CD4-positive, alpha-beta memory T cell (primary cell): ENCODE measurements at regions of chr20 and their contacts with region 1.

Region 1: DNA sequence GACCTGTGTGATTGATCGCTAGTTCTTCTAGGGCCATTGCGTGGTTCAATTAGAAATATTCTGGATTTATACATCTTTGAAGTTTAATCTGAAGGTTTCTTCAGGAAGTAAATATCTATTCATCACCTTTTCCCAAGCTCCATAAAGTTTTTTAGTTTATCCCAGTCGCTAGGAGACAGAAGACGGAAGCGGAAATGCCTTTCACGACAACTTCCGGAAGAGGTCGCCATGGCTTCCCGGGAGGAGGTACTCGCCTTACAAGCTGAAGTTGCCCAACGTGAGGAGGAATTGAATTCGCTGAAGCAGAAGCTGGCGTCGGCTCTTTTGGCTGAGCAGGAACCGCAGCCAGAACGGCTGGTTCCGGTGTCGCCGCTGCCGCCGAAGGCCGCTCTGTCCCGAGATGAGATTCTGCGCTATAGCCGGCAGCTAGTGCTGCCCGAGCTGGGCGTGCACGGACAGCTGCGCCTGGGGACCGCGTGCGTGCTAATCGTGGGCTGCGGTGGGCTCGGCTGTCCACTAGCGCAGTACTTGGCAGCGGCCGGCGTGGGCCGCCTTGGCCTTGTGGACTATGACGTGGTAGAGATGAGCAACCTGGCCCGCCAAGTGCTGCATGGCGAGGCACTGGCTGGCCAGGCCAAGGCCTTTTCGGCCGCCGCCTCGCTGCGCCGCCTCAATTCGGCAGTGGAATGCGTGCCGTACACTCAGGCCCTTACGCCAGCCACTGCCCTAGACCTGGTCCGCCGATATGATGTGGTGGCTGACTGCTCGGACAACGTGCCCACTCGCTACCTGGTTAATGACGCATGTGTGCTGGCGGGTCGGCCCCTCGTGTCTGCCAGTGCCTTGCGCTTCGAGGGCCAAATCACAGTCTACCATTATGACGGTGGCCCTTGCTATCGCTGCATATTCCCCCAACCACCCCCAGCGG is at the start of gene MOCS3:
- DNase-seq: peak; percentile 93
- H3K4me3 ChIP-seq: peak within 1 kb of the TSS; percentile 86 to 90
- H3K4me3 Mint-ChIP-seq: peak within 1 kb of the TSS; percentile 91 to 98 (median 96)
- H3K27ac ChIP-seq: peak within 1 kb of the TSS; percentile 91
- H3K27ac Mint-ChIP-seq: peak within 1 kb of the TSS; percentile 96 to 100 (median 100)
- H3K4me1 ChIP-seq: peaks cover 40% of the 10 kb centered on the region
- H3K4me1 Mint-ChIP-seq: peaks cover 23 to 68% (median 52%) of the 10 kb centered on the region in 4 donors
- H3K27me3 ChIP-seq: no peaks in the 10 kb centered on the region
- H3K27me3 Mint-ChIP-seq: no peaks in the 10 kb centered on the region
- total RNA-seq, gene MOCS3: 8.8 to 8.9 TPM

Region 2: GRCh38 chr20:50731055-50731871 is 227.6 kb before region 1 on chr20 and contains the start of gene PARD6B:
- CTCF ChIA-PET with region 1: no interaction called
- POLR2A ChIA-PET with region 1: interaction called, 6 read pairs
- intact Hi-C with region 1: loop called (anchors 1 kb)
- DNase-seq: peak; percentile 99 to 100 (median 100)
- H3K4me3 ChIP-seq: peak within 1 kb of the TSS; percentile 66 to 72
- H3K4me3 Mint-ChIP-seq: peak within 1 kb of the TSS; percentile 90 to 95 (median 92)
- H3K27ac ChIP-seq: peak within 1 kb of the TSS; percentile 55
- H3K27ac Mint-ChIP-seq: peak within 1 kb of the TSS; percentile 83 to 91 (median 87)
- H3K4me1 ChIP-seq: peaks cover 21% of the 10 kb centered on the region
- H3K4me1 Mint-ChIP-seq: peaks cover 16 to 37% (median 24%) of the 10 kb centered on the region in 4 donors
- H3K27me3 ChIP-seq: no peaks in the 10 kb centered on the region
- H3K27me3 Mint-ChIP-seq: no peaks in the 10 kb centered on the region
- total RNA-seq, gene PARD6B: 10.9 to 12.7 TPM

Region 3: GRCh38 chr20:50819349-50819748 is 139.5 kb before region 1 on chr20:
- CTCF ChIA-PET with region 1: no interaction called
- POLR2A ChIA-PET with region 1: interaction called, 4 read pairs
- intact Hi-C with region 1: loop called (anchors 1 kb)
- DNase-seq: no peak
- H3K4me3 ChIP-seq: no peak overlapping the region
- H3K4me3 Mint-ChIP-seq: no peak overlapping the region
- H3K27ac ChIP-seq: no peak overlapping the region
- H3K27ac Mint-ChIP-seq: peak overlapping the region in 2 of 7 donors; percentile 55 to 57
- H3K4me1 ChIP-seq: peaks cover 15% of the 10 kb centered on the region
- H3K4me1 Mint-ChIP-seq: peaks cover 14 to 32% (median 19%) of the 10 kb centered on the region in 4 donors
- H3K27me3 ChIP-seq: no peaks in the 10 kb centered on the region
- H3K27me3 Mint-ChIP-seq: no peaks in the 10 kb centered on the region

Region 4: GRCh38 chr20:50948132-50948785 is 10.6 kb before region 1 on chr20:
- CTCF ChIA-PET with region 1: interaction called, 4 read pairs
- POLR2A ChIA-PET with region 1: interaction called, 17 read pairs
- intact Hi-C with region 1: no loop called
- DNase-seq: no peak
- H3K4me3 ChIP-seq: no peak overlapping the region
- H3K4me3 Mint-ChIP-seq: no peak overlapping the region
- H3K27ac ChIP-seq: no peak overlapping the region
- H3K27ac Mint-ChIP-seq: peak overlapping the region in 2 of 7 donors; percentile 50 to 57
- H3K4me1 ChIP-seq: no peaks in the 10 kb centered on the region
- H3K4me1 Mint-ChIP-seq: peaks cover 0 to 9% (median 6%) of the 10 kb centered on the region in 4 donors
- H3K27me3 ChIP-seq: no peaks in the 10 kb centered on the region
- H3K27me3 Mint-ChIP-seq: no peaks in the 10 kb centered on the region